K562 (cell line): ENCODE measurements at regions of chr18 and their contacts with region 1.

Region 1: DNA sequence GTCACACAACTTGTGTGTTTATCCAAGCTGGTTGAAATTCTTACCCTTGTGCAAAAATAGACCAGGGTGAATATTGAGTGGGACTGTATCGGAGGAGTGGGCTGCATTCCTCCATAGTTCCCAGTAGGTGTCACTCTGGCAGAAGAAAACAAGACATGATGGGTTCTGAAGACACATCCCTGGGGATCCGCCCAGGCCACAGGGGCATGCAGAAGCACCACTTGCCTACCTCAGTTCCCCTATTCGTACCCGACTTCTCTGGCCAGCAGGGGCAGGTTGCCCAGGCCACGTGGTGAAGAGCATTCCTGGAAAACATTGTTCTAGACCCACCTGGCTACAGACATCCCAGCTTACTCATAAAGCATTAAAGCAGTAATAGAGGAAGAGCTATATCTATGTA is 168.2 kb downstream of the FAM210A start:
- DNase-seq: peak; percentile 47 to 64 (median 51)
- ATAC-seq: peak; percentile 96
- H3K4me3 ChIP-seq: no peak overlapping the region
- H3K27ac ChIP-seq: no peak overlapping the region
- H3K4me1 ChIP-seq: no peaks in the 10 kb centered on the region
- H3K27me3 ChIP-seq: no peaks in the 10 kb centered on the region; a peak in 1 of 5 replicates
- CTCF ChIP-seq: peak; percentile 48 to 69 (median 69)
- EP300 ChIP-seq: no peak
- POLR2A ChIP-seq: no peak
- RAD21 ChIP-seq: peak; percentile 47 to 74

Region 2: DNA sequence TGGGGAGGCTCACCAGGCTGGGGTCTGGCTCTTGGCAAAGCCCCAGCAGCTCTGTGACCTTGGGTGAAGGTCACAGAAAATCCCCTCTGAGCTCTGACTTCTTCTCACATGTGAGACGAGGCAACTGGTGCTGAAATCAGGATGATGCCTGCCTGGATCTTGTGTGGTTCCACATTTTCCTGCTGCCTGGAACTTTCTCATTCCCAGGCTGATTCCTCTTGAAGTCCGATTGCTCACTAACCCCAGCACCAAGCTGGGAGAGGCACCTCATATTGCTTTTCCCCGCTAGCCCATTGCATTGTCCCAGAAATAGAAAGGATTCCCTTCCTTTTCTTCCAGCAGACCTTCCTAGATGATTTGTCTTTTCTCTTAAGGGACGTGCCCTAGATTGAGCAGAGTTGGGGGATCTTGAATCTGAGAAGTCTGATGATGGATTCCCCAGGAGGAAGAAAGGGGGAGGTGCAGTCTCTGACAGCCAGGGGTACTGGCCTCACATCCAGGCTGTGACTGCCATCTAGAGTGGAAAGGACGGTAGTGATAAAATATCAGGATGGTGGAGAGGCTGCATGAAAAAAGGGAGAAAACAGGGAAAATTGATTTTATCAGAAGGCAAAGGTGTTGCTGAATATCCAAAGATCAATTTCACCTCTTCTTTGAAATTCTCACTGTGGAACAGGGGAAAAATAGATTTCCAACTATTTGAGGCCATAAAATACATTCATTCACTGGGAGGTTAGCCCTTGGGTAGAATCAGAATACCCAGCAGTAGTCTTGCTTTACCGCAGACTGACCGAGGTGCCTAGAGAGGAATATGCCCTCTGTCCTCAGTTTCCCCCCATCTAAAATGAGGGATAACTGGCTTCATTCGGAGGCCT is 72.0 kb after region 1 on chr18:
- CTCF ChIA-PET with region 1: interaction called, 3 read pairs
- POLR2A ChIA-PET with region 1: interaction called, 3 read pairs
- in situ Hi-C with region 1: no loop called
- intact Hi-C with region 1: loop called (anchors 1 kb)
- DNase-seq: peak; percentile 66 to 76 (median 74)
- ATAC-seq: peak; percentile 94
- H3K4me3 ChIP-seq: no peak overlapping the region
- H3K27ac ChIP-seq: no peak overlapping the region
- H3K4me1 ChIP-seq: no peaks in the 10 kb centered on the region
- H3K27me3 ChIP-seq: peaks cover 7 to 30% of the 10 kb centered on the region in 2 experiments; a peak in 4 of 5 replicates
- CTCF ChIP-seq: peak; percentile 67 to 91 (median 87)
- EP300 ChIP-seq: no peak
- POLR2A ChIP-seq: no peak
- RAD21 ChIP-seq: peak; percentile 70 to 81

Region 3: DNA sequence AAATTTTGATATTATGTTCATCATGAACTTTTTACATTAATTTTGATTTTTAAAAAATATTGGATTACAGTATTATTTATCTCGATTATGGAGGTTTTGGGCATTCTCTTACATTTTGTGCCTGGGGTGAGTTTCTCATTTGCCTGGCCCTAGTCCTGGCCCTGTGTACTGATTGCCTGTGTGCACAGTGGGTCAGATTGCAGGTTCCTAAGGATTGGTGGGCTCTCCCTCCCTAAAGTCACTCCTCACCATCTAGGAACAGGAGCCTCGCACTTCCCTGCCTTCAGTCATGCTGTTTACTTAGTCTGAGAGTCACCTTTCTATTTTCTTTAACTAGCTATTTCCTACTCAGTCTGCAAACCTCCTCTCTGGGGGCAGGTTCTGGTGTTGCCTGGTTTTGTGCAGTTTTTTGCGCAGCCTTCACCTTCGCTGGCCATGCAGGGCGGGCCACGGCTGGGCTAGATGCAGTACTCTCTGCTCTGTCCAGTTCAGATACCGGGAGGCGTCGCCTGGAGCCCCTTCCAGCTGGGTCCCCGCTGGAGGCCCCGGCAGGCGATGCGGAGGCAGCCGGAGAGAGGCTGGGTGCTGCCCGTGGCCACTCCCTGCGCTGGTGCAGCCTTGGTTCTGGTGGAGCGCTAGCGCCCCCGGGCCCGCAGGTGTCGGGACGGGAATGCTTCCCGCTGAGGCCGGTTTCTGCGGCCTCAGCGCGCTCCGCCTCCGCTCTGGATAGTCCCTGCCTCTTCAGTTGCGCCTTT is 242.6 kb after region 1 on chr18:
- CTCF ChIA-PET with region 1: interaction called, 3 read pairs
- POLR2A ChIA-PET with region 1: no interaction called
- in situ Hi-C with region 1: no loop called
- intact Hi-C with region 1: loop called (anchors 5 kb)
- DNase-seq: peak; percentile 31 to 56 (median 42)
- ATAC-seq: peak; percentile 96
- H3K4me3 ChIP-seq: no peak overlapping the region
- H3K27ac ChIP-seq: no peak overlapping the region
- H3K4me1 ChIP-seq: peaks cover 0 to 9% of the 10 kb centered on the region in 2 experiments; a peak in 2 of 5 replicates
- H3K27me3 ChIP-seq: peaks cover 11 to 30% of the 10 kb centered on the region in 2 experiments; a peak in 4 of 5 replicates
- CTCF ChIP-seq: peak; percentile 52 to 62 (median 58); a peak in 5 of 6 replicates
- EP300 ChIP-seq: no peak
- POLR2A ChIP-seq: no peak
- RAD21 ChIP-seq: peak; percentile 17 to 63; a peak in 3 of 4 replicates

Region 4: DNA sequence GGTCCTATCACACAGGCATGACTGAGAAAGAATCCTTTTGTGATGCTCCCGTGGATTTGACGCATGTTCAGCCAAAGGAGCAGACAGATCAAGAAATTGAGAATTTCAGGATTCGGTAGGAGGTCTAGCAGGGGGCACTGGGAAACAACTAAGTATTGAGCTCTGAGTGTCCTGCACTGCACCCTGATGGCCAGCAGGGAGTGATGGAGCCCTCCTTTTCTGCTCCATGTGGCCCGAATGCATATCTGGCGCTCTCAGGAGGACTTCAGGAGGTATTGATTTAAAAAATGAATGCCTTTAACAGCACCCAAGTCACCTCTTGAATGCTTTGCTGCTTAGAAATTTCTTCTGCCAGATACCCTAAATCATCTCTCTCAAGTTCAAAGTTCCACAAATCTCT is 516.1 kb after region 1 on chr18:
- CTCF ChIA-PET with region 1: no interaction called
- POLR2A ChIA-PET with region 1: no interaction called
- in situ Hi-C with region 1: no loop called
- intact Hi-C with region 1: loop called (anchors 10 kb)
- DNase-seq: peak; percentile 23 to 39 (median 30)
- ATAC-seq: peak; percentile 96
- H3K4me3 ChIP-seq: no peak overlapping the region
- H3K27ac ChIP-seq: no peak overlapping the region
- H3K4me1 ChIP-seq: no peaks in the 10 kb centered on the region
- H3K27me3 ChIP-seq: no peaks in the 10 kb centered on the region
- CTCF ChIP-seq: peak; percentile 40 to 93 (median 65); a peak in 5 of 6 replicates
- EP300 ChIP-seq: no peak
- POLR2A ChIP-seq: no peak
- RAD21 ChIP-seq: peak in 1 of 2 experiments; percentile 34; a peak in 2 of 4 replicates

Region 5: GRCh38 chr18:14086458-14087231 is 528.5 kb after region 1 on chr18:
- CTCF ChIA-PET with region 1: no interaction called
- POLR2A ChIA-PET with region 1: no interaction called
- in situ Hi-C with region 1: loop called (anchors 10 kb)
- intact Hi-C with region 1: no loop called
- DNase-seq: peak; percentile 17 to 51 (median 28)
- ATAC-seq: peak; percentile 89
- H3K4me3 ChIP-seq: no peak overlapping the region
- H3K27ac ChIP-seq: no peak overlapping the region
- H3K4me1 ChIP-seq: no peaks in the 10 kb centered on the region
- H3K27me3 ChIP-seq: no peaks in the 10 kb centered on the region; a peak in 1 of 5 replicates
- CTCF ChIP-seq: peak; percentile 67 to 85 (median 74)
- EP300 ChIP-seq: no peak
- POLR2A ChIP-seq: no peak
- RAD21 ChIP-seq: peak; percentile 54 to 81